Endothelial cell of umbilical vein (primary cell): ENCODE measurements at regions of chr2 and their contacts with region 1.

Region 1: DNA sequence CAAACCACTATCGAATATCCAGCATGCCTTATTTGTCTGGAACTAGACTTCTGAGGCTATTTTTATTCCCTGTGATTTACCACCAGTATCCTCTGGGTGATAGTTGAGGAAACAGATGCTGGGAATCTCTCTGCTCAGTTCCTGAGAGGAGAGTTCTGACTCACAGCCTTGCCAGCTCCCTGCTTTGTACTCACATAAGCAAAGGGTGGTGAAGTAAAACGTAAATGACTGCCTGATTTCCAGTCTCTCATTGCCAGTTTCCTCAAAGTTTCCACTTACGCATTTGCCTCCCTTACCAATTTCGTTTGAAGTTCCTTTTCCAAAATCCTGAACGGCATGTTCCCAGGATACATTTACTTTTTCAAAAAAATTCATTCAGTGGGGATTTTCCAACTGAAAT is 69.2 kb upstream of the HNRNPA3 start:
- DNase-seq: peak; percentile 93
- H3K4me3 ChIP-seq: no peak overlapping the region
- H3K27ac ChIP-seq: no peak overlapping the region
- H3K4me1 ChIP-seq: peaks cover 11% of the 10 kb centered on the region
- H3K27me3 ChIP-seq: peaks cover 9% of the 10 kb centered on the region in 2 experiments
- CTCF ChIP-seq: no peak
- POLR2A ChIP-seq: no peak

Region 2: GRCh38 chr2:176923205-176923604 is 220.2 kb before region 1 on chr2:
- CTCF ChIA-PET with region 1: no interaction called
- POLR2A ChIA-PET with region 1: no interaction called
- dilution Hi-C with region 1: no loop called
- intact Hi-C with region 1: loop called (anchors 2 kb)
- DNase-seq: no peak
- H3K4me3 ChIP-seq: no peak overlapping the region
- H3K27ac ChIP-seq: no peak overlapping the region
- H3K4me1 ChIP-seq: no peaks in the 10 kb centered on the region
- H3K27me3 ChIP-seq: no peaks in the 10 kb centered on the region
- CTCF ChIP-seq: no peak
- POLR2A ChIP-seq: no peak

Region 3: GRCh38 chr2:177124371-177124770 is 19.1 kb before region 1 on chr2:
- CTCF ChIA-PET with region 1: interaction called, 8 read pairs
- POLR2A ChIA-PET with region 1: no interaction called
- dilution Hi-C with region 1: no loop called
- intact Hi-C with region 1: loop called (anchors 1 kb)
- DNase-seq: peak; percentile 79
- H3K4me3 ChIP-seq: no peak overlapping the region
- H3K27ac ChIP-seq: no peak overlapping the region
- H3K4me1 ChIP-seq: peaks cover 8% of the 10 kb centered on the region
- H3K27me3 ChIP-seq: no peaks in the 10 kb centered on the region
- CTCF ChIP-seq: no peak
- POLR2A ChIP-seq: no peak